H1 (cell line): ENCODE measurements at regions of chr1 and their contacts with region 1.

Region 1: DNA sequence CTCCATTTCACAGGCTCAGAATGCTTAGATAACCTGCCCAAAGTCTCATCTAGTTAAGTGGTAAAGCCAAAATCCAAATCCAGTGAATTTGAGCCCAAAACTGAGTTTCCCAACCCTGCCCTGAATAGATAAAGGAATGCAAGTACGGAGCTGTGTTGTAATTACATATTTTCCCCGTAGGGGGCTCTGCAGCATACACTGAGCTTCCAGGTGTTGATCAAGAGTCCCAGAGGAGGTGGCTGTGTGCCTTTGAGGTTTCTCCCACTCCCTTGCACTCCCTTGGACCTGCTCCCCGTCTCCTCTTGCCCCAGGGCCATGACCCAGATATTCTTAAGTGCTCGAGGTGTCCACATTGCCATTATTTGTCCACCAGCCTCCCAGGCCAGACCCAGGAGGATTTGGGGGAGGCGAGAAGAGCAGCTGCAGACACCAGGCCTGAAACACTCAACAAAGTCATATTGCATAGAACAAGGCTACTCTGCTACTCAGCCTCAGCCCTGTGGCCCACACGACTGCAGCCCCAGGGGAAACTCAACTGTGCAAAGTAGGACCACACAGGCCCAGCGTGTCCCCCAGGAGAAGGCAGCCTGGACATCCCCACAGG is 18.4 kb upstream of the LY9 start:
- DNase-seq: peak in 1 of 2 experiments; percentile 70
- H3K4me3 ChIP-seq: no peak overlapping the region
- H3K27ac ChIP-seq: no peak overlapping the region
- H3K4me1 ChIP-seq: no peaks in the 10 kb centered on the region
- H3K27me3 ChIP-seq: no peaks in the 10 kb centered on the region
- CTCF ChIP-seq: peak; percentile 26 to 71 (median 67)
- EP300 ChIP-seq: no peak
- POLR2A ChIP-seq: no peak
- RAD21 ChIP-seq: peak; percentile 67 to 70

Region 2: DNA sequence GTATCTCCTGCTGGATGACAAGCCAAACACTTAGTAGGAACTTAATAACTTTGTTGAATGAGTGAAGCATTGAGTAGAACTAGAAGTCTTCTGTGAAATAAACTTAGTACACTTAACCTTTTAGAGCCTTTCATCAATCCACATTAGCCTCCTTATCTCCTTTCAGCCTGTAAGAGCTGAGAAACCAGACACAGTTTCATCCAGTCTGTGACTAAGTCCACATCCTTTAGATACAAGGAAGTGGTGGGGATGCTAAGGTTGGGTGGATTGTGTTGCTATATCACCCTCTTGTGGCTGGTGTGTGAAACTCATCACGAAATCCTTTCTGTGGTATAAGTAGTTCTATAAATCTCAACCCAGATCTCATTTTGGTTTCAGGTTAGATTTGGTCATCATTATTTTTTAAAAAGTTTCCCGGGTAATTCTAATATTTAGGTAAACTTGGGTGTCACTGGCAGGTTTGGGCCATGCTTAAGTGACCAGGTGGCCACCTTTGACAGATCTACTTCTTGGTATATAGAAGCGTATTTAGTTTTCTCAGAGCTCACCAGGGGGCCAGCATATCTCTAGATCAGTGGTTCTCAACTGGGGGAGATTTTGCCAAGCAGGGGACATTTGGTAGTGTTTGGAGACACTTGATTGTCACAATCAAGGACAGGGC is 170.4 kb before region 1 on chr1:
- CTCF ChIA-PET with region 1: no interaction called
- POLR2A ChIA-PET with region 1: no interaction called
- DNase-seq: no peak
- H3K4me3 ChIP-seq: no peak overlapping the region
- H3K27ac ChIP-seq: no peak overlapping the region
- H3K4me1 ChIP-seq: peaks cover 0 to 2% (median 0%) of the 10 kb centered on the region in 4 experiments; a peak in 1 of 7 replicates
- H3K27me3 ChIP-seq: no peaks in the 10 kb centered on the region
- CTCF ChIP-seq: peak in 2 of 3 experiments; percentile 84 to 86; a peak in 3 of 4 replicates
- EP300 ChIP-seq: no peak
- POLR2A ChIP-seq: no peak
- RAD21 ChIP-seq: peak; percentile 94

Region 3: GRCh38 chr1:160675641-160676410 is 101.8 kb before region 1 on chr1:
- CTCF ChIA-PET with region 1: interaction called, 75 read pairs
- POLR2A ChIA-PET with region 1: no interaction called
- DNase-seq: peak; percentile 43 to 71
- H3K4me3 ChIP-seq: no peak overlapping the region
- H3K27ac ChIP-seq: no peak overlapping the region
- H3K4me1 ChIP-seq: peaks cover 16 to 27% (median 16%) of the 10 kb centered on the region in 4 experiments
- H3K27me3 ChIP-seq: no peaks in the 10 kb centered on the region
- CTCF ChIP-seq: peak; percentile 74 to 91 (median 88)
- EP300 ChIP-seq: no peak
- POLR2A ChIP-seq: no peak
- RAD21 ChIP-seq: peak; percentile 68 to 81

Region 4: DNA sequence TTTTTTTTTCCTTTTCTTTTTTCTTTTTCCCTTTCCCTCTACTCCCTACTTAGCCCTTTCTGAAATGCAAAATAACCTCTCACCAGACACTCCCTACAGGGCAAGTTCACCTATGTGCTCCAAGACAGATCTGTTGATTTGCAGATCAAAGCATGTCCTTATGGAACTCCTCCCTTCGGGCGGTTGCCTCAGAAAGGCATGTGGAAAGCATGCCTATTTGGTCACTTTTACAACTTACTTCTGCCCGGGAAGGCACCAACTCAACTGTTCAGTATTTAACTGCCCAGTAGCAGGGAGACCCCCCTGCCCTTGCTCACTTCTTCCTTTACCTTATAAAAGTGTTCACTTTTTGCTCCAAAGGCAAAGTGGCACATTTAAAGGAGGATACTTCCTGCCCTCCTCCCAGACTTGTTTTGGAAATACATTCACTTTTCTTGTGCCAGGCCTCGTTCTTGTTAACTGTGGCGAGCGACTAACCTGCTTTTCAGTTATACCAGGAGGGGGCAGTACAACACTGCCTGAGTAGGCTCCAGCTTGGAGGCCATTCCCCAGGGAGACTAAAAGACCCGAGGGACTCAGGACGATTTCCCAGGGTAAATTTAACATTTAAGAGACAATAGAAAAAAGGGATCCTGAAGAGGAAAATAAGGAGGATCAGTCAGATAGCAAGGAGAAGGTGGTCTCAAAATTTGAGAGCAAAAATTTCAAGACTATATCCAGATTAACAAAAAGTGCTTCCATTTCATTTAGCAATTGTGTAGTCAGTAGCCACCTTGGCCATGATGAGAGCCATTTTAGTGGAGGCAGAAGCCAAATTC is 50.9 kb before region 1 on chr1:
- CTCF ChIA-PET with region 1: interaction called, 35 read pairs
- POLR2A ChIA-PET with region 1: no interaction called
- DNase-seq: peak; percentile 62 to 68
- H3K4me3 ChIP-seq: no peak overlapping the region
- H3K27ac ChIP-seq: peak overlapping the region; percentile 12; the same call in 1 of the 2 replicates
- H3K4me1 ChIP-seq: peaks cover 0 to 5% (median 2%) of the 10 kb centered on the region in 4 experiments; a peak in 3 of 7 replicates
- H3K27me3 ChIP-seq: no peaks in the 10 kb centered on the region
- CTCF ChIP-seq: peak; percentile 59 to 92 (median 81)
- EP300 ChIP-seq: no peak
- POLR2A ChIP-seq: no peak
- RAD21 ChIP-seq: peak; percentile 95 to 96

Region 5: GRCh38 chr1:160789702-160790611 is 12.4 kb after region 1 on chr1:
- CTCF ChIA-PET with region 1: interaction called, 80 read pairs
- POLR2A ChIA-PET with region 1: interaction called, 5 read pairs
- DNase-seq: no peak
- H3K4me3 ChIP-seq: no peak overlapping the region
- H3K27ac ChIP-seq: no peak overlapping the region
- H3K4me1 ChIP-seq: no peaks in the 10 kb centered on the region
- H3K27me3 ChIP-seq: no peaks in the 10 kb centered on the region
- CTCF ChIP-seq: no peak
- EP300 ChIP-seq: no peak
- POLR2A ChIP-seq: no peak
- RAD21 ChIP-seq: no peak

Region 6: GRCh38 chr1:160821628-160822027 is 44.0 kb after region 1 on chr1:
- CTCF ChIA-PET with region 1: interaction called, 35 read pairs
- POLR2A ChIA-PET with region 1: no interaction called
- DNase-seq: peak in 1 of 2 experiments; percentile 76
- H3K4me3 ChIP-seq: no peak overlapping the region
- H3K27ac ChIP-seq: no peak overlapping the region
- H3K4me1 ChIP-seq: peaks cover 0 to 6% (median 2%) of the 10 kb centered on the region in 4 experiments; a peak in 2 of 7 replicates
- H3K27me3 ChIP-seq: no peaks in the 10 kb centered on the region
- CTCF ChIP-seq: peak; percentile 43 to 59 (median 46)
- EP300 ChIP-seq: no peak
- POLR2A ChIP-seq: no peak
- RAD21 ChIP-seq: peak in 1 of 2 experiments; percentile 55; a peak in 3 of 4 replicates

Region 7: DNA sequence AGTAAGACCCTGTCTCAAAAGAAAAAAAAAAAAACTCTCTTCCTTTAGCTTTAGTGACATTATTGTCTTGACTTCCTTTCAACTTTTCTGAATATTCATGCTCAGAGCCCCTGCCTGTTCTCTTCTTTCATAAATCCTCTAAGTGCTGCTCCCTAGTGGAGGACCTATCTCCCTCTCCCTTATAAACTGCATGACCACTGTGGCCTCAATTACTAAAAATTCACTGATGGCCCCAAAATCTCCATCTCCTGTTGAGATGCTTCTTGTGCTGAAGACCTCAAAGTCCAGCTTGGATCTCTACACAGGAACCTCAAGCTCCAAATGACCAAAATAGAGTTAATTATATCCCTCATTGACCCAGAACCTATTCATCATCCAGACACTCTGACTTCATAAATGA is 99.6 kb after region 1 on chr1:
- CTCF ChIA-PET with region 1: interaction called, 12 read pairs
- POLR2A ChIA-PET with region 1: no interaction called
- DNase-seq: no peak
- H3K4me3 ChIP-seq: no peak overlapping the region
- H3K27ac ChIP-seq: no peak overlapping the region
- H3K4me1 ChIP-seq: no peaks in the 10 kb centered on the region; a peak in 1 of 7 replicates
- H3K27me3 ChIP-seq: no peaks in the 10 kb centered on the region
- CTCF ChIP-seq: peak in 2 of 3 experiments; percentile 42 to 45; a peak in 3 of 4 replicates
- EP300 ChIP-seq: no peak
- POLR2A ChIP-seq: no peak
- RAD21 ChIP-seq: peak; percentile 13 to 38; a peak in 2 of 4 replicates

Region 8: DNA sequence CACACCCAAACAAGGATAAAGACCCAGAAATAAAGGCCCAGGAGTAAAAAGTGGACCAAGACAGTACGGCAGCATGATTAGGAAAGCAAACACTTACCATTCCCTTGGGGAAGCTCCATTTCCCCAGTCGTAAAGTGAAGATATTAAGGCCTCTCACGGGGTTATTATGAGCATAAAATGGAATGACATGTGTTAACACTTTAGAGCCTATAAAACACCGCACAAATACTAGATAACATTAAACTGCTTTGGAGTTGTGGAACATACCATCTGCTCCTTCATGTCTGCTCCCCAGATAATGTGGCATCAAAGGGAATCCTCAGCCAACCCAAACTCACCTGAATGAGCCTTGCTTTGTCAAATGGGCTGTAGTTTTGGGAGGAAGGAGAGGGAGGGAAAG is 185.9 kb after region 1 on chr1:
- CTCF ChIA-PET with region 1: no interaction called
- POLR2A ChIA-PET with region 1: no interaction called
- DNase-seq: no peak
- H3K4me3 ChIP-seq: no peak overlapping the region
- H3K27ac ChIP-seq: no peak overlapping the region
- H3K4me1 ChIP-seq: no peaks in the 10 kb centered on the region
- H3K27me3 ChIP-seq: no peaks in the 10 kb centered on the region
- CTCF ChIP-seq: no peak
- EP300 ChIP-seq: no peak
- POLR2A ChIP-seq: no peak
- RAD21 ChIP-seq: no peak